Activated B cell treated with CpG ODN at 0.5 μM for 24 hours (primary cell): ENCODE measurements at regions of chr2 and their contacts with region 1.

Region 1: GRCh38 chr2:147937744-147938349 is 82.7 kb downstream of the ORC4 start:
- DNase-seq: no peak
- ATAC-seq: peak; percentile 37
- H3K4me3 Mint-ChIP-seq: no peak overlapping the region
- H3K27ac Mint-ChIP-seq: no peak overlapping the region
- H3K4me1 Mint-ChIP-seq: no peaks in the 10 kb centered on the region
- H3K27me3 Mint-ChIP-seq: no peaks in the 10 kb centered on the region
- CTCF ChIP-seq: peak; percentile 95

Region 2: DNA sequence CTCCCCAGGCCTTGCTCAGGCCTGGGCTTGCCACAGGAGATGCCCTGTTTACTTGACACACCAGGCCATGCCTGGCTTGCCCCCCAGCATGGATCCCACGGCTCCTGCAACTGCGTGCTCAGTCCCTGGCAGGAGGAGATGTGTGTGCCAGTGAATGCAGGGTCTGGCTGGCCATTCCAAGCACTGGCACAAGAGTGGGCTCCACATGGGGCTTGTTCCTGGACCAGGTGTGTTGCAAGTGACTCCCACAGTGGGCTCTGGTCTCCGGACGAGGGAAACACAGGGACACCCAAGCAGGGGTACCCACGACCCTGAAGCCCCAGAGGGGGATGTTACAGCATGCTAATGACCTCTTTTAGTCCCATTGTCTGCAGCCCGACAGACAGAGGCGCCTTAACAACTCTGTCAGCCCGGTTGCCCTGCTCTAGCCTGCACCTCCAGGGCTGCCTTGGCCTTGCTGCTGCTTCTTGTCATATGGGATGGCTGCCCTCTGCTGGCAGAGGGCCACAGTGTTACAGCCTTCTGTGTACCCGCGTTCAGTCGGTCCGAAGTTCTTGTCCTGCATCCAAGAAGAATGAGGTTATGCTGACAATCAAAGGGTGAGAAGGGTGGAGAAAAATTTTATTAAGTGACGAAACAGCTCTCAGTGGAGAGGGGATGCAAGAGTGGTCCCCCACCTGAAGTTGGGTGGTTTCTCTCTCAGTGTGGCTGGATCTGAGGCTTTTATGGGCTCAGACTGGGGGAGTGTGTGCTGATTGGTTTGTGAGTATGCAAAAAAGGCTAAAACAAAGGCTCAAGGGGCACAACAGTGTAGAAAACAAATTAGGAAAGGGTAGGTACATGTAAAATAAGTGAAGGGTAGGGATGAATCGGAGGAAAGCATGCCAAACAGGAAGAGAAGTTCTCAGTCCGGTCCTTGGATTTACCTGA is 263.5 kb after region 1 on chr2:
- CTCF ChIA-PET with region 1: no interaction called
- POLR2A ChIA-PET with region 1: no interaction called
- intact Hi-C with region 1: loop called (anchors 1 kb)
- DNase-seq: peak; percentile 16
- ATAC-seq: peak; percentile 49
- H3K4me3 Mint-ChIP-seq: no peak overlapping the region
- H3K27ac Mint-ChIP-seq: no peak overlapping the region
- H3K4me1 Mint-ChIP-seq: no peaks in the 10 kb centered on the region
- H3K27me3 Mint-ChIP-seq: no peaks in the 10 kb centered on the region
- CTCF ChIP-seq: no peak

Region 3: GRCh38 chr2:148726228-148726627 is 788.4 kb after region 1 on chr2:
- CTCF ChIA-PET with region 1: no interaction called
- POLR2A ChIA-PET with region 1: no interaction called
- intact Hi-C with region 1: no loop called
- DNase-seq: no peak
- ATAC-seq: no peak
- H3K4me3 Mint-ChIP-seq: no peak overlapping the region
- H3K27ac Mint-ChIP-seq: no peak overlapping the region
- H3K4me1 Mint-ChIP-seq: peaks cover 68% of the 10 kb centered on the region
- H3K27me3 Mint-ChIP-seq: no peaks in the 10 kb centered on the region
- CTCF ChIP-seq: no peak